Mucosa of descending colon (tissue), 3 donors: ENCODE measurements at regions of chr9 and their contacts with region 1.

Region 1: GRCh38 chr9:6353851-6354686 is 25.9 kb downstream of the TPD52L3 start:
- DNase-seq: peak in 1 of 3 donors; percentile 30
- ATAC-seq: peak; percentile 82
- H3K4me3 ChIP-seq: no peak overlapping the region
- H3K4me1 ChIP-seq: no peaks in the 10 kb centered on the region
- CTCF ChIP-seq: peak; percentile 73

Region 2: GRCh38 chr9:6428940-6429889 is 75.1 kb after region 1 on chr9:
- intact Hi-C with region 1: no loop called
- DNase-seq: no peak
- ATAC-seq: peak; percentile 80
- H3K4me3 ChIP-seq: no peak overlapping the region
- H3K4me1 ChIP-seq: no peaks in the 10 kb centered on the region
- CTCF ChIP-seq: no peak

Region 3: DNA sequence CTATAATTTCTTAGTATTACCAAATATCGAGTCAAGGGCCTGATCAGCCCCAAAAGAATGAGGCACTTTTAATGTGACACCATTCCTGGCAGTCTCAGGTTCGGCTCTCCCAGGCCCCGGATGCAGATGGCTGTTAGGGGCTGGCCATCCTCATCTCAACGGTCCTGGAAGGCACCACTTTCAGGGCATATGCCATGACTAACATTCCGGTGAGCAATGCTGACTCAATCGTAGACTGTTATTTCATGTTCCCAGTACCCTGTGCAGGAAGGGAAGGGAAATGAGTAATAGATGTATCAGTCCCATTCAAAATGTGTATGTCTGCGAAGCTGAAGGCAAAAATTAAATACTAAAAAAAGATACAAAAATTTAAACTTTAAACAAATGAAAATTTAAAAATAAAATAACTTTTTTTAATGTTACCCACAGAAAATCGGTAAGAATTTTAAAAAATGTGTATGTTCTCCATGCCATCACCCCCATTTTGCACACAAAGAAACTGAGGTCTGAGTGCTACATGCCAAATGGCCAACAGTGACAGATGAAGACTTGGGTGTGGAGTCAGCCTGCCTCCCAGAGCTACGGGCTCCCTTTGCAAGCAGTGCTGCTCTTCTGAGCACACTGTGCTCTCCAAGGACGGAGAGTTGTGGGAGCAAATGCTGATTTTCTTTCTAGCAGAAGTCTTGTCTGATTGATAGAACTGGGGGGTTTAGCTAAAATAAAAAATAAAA is 212.5 kb after region 1 on chr9:
- intact Hi-C with region 1: loop called (anchors 2 to 10 kb)
- DNase-seq: no peak
- ATAC-seq: no peak
- H3K4me3 ChIP-seq: no peak overlapping the region
- H3K4me1 ChIP-seq: no peaks in the 10 kb centered on the region
- CTCF ChIP-seq: no peak

Region 4: GRCh38 chr9:6575324-6576034 is 221.4 kb after region 1 on chr9:
- intact Hi-C with region 1: loop called in 1 of 2 experiments (anchors 10 kb)
- DNase-seq: no peak
- ATAC-seq: peak; percentile 36
- H3K4me3 ChIP-seq: no peak overlapping the region
- H3K4me1 ChIP-seq: no peaks in the 10 kb centered on the region
- CTCF ChIP-seq: no peak